CD4-positive, alpha-beta memory T cell (primary cell): ENCODE measurements at regions of chr10 and their contacts with region 1.

Region 1: GRCh38 chr10:102476466-102477141 is 25.3 kb upstream of the C10orf95 start:
- DNase-seq: no peak
- H3K4me3 ChIP-seq: no peak overlapping the region
- H3K4me3 Mint-ChIP-seq: no peak overlapping the region
- H3K27ac ChIP-seq: no peak overlapping the region
- H3K27ac Mint-ChIP-seq: peak overlapping the region in 6 of 7 donors; percentile 18 to 86 (median 59)
- H3K4me1 ChIP-seq: peaks cover 20% of the 10 kb centered on the region
- H3K4me1 Mint-ChIP-seq: peaks cover 11 to 28% (median 17%) of the 10 kb centered on the region in 4 donors
- H3K27me3 ChIP-seq: no peaks in the 10 kb centered on the region
- H3K27me3 Mint-ChIP-seq: no peaks in the 10 kb centered on the region

Region 2: GRCh38 chr10:102090772-102091171 is 385.8 kb before region 1 on chr10:
- CTCF ChIA-PET with region 1: no interaction called
- POLR2A ChIA-PET with region 1: no interaction called
- intact Hi-C with region 1: no loop called
- DNase-seq: no peak
- H3K4me3 ChIP-seq: no peak overlapping the region
- H3K4me3 Mint-ChIP-seq: no peak overlapping the region
- H3K27ac ChIP-seq: no peak overlapping the region
- H3K27ac Mint-ChIP-seq: peak overlapping the region in 3 of 7 donors; percentile 3 to 75 (median 9)
- H3K4me1 ChIP-seq: no peaks in the 10 kb centered on the region
- H3K4me1 Mint-ChIP-seq: peaks cover 0 to 2% (median 0%) of the 10 kb centered on the region in 4 donors
- H3K27me3 ChIP-seq: no peaks in the 10 kb centered on the region
- H3K27me3 Mint-ChIP-seq: no peaks in the 10 kb centered on the region

Region 3: DNA sequence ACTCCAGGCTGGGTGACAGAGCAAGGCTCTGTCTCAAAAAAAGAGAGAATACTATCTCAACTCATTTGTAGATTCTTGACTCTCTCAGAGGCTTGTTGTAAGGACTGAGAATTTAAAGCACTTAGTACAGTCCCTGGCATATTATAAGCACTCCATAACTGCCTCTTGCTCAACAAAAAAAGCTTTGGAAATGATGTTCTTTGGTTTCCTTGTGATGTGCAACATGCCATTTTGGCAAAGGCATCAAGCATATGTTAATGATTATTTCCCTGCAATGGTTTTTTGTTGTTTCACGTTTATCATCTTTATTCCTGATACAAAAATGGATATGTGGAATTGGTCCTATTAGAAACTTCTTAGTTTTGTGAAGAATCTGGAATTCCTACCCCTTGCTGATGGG is 308.7 kb before region 1 on chr10:
- CTCF ChIA-PET with region 1: no interaction called
- POLR2A ChIA-PET with region 1: no interaction called
- intact Hi-C with region 1: loop called (anchors 2 kb)
- DNase-seq: no peak
- H3K4me3 ChIP-seq: no peak overlapping the region
- H3K4me3 Mint-ChIP-seq: no peak overlapping the region
- H3K27ac ChIP-seq: no peak overlapping the region
- H3K27ac Mint-ChIP-seq: peak overlapping the region in 1 of 7 donors; percentile 36
- H3K4me1 ChIP-seq: peaks cover 4% of the 10 kb centered on the region
- H3K4me1 Mint-ChIP-seq: peaks cover 4 to 11% (median 6%) of the 10 kb centered on the region in 4 donors
- H3K27me3 ChIP-seq: no peaks in the 10 kb centered on the region
- H3K27me3 Mint-ChIP-seq: no peaks in the 10 kb centered on the region

Region 4: DNA sequence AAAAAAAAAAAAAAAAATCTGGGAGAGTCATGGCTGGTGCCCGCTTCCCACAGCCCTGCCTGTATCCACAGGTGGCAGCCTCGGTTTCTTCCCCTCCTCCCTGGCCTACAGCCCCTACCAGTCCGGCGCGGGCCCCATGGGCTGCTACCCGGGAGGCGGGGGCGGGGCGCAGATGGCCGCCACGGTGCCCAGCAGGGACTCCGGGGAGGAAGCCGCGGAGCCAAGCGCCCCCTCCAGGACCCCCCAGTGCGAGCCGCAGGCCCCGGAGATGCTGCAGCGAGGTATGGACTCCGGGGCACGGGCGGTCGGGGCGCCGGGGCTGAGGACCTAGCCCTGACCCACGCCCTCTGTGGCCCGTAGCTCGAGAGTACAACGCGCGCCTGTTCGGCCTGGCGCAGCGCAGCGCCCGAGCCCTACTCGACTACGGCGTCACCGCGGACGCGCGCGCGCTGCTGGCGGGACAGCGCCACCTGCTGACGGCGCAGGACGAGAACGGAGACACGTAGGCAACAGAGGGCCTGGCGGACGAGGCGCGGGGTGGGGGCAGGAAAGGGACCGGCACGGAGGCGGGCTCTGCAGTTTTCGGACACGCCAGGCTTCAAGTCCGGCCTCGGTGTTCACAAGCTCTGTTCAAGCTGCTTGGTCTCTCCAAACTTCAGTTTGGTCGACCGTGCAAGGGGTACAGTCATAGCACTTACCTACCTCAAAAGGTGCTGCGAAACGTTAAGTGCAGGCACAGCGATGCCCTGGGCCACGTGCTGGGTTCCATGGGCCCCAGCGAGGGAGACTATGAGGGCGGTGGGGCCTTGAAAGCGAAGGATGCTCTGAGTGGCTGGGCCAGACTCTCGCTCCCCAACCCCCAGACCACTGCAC is 77.2 kb before region 1 on chr10:
- CTCF ChIA-PET with region 1: interaction called, 48 read pairs
- POLR2A ChIA-PET with region 1: interaction called, 13 read pairs
- intact Hi-C with region 1: loop called (anchors 1 kb)
- DNase-seq: peak; percentile 86 to 90 (median 87)
- H3K4me3 ChIP-seq: peak overlapping the region in 1 of 2 donors; percentile 49
- H3K4me3 Mint-ChIP-seq: peak overlapping the region; percentile 53 to 81 (median 74)
- H3K27ac ChIP-seq: peak overlapping the region; percentile 100
- H3K27ac Mint-ChIP-seq: peak overlapping the region; percentile 89 to 100 (median 100)
- H3K4me1 ChIP-seq: peaks cover 44% of the 10 kb centered on the region
- H3K4me1 Mint-ChIP-seq: peaks cover 19 to 68% (median 32%) of the 10 kb centered on the region in 4 donors
- H3K27me3 ChIP-seq: no peaks in the 10 kb centered on the region
- H3K27me3 Mint-ChIP-seq: no peaks in the 10 kb centered on the region

Region 5: DNA sequence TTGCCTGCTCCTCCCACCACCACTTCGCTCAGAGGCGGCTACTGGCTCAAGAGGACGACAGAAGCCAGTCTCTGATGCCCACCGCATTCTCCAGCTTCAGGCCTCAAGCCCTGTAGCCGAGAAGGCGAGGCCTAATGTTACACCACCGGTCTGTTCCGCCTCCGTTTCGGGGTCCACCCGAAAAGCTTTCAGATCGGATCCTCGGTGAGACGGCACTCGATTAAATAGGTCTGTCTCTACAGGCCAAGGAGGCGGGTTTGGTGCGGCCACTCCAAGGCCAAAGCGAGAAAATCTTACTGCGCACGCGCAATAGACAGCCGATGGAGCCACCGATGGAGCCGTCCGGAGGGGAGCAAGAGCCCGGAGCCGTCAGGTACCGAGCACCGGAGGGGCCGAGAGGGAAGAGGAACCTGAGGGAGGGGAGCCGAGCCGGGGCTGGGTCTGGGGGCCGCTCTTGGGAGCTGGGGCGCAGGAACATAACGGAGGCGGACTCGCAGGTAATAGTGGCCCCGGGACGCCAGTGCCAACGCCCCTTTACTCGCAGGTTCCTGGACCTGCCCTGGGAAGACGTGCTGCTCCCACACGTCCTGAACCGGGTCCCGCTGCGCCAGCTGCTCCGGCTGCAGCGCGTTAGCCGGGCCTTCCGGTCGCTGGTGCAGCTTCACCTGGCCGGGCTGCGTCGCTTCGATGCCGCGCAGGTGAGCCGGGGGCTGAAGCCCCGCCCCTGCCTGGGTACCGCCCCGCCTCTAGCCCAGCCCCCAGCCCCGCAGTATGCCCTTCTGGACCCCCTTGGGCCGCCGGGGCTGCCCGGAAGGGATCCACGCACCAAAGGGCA is 55.6 kb before region 1 on chr10 and contains the start of gene FBXL15:
- CTCF ChIA-PET with region 1: interaction called, 21 read pairs
- POLR2A ChIA-PET with region 1: interaction called, 16 read pairs
- intact Hi-C with region 1: loop called (anchors 1 kb)
- DNase-seq: peak; percentile 92 to 94 (median 93)
- H3K4me3 ChIP-seq: peak within 1 kb of the TSS; percentile 61 to 90
- H3K4me3 Mint-ChIP-seq: peak within 1 kb of the TSS; percentile 90 to 99 (median 96)
- H3K27ac ChIP-seq: peak within 1 kb of the TSS; percentile 64
- H3K27ac Mint-ChIP-seq: peak within 1 kb of the TSS; percentile 92 to 98 (median 96)
- H3K4me1 ChIP-seq: peaks cover 37% of the 10 kb centered on the region
- H3K4me1 Mint-ChIP-seq: peaks cover 17 to 53% (median 33%) of the 10 kb centered on the region in 4 donors
- H3K27me3 ChIP-seq: peaks cover 9% of the 10 kb centered on the region
- H3K27me3 Mint-ChIP-seq: peaks cover 10 to 16% of the 10 kb centered on the region in 2 donors
- total RNA-seq, gene FBXL15: 21.1 to 24.1 TPM

Region 6: GRCh38 chr10:102432162-102432950 is 44.2 kb before region 1 on chr10 and contains the start of gene CUEDC2:
- CTCF ChIA-PET with region 1: interaction called, 15 read pairs
- POLR2A ChIA-PET with region 1: interaction called, 3 read pairs
- intact Hi-C with region 1: no loop called
- DNase-seq: peak; percentile 89 to 95 (median 93)
- H3K4me3 ChIP-seq: peak within 1 kb of the TSS; percentile 83 to 92
- H3K4me3 Mint-ChIP-seq: peak within 1 kb of the TSS; percentile 90 to 95 (median 94)
- H3K27ac ChIP-seq: peak within 1 kb of the TSS; percentile 79
- H3K27ac Mint-ChIP-seq: peak within 1 kb of the TSS; percentile 84 to 98 (median 97)
- H3K4me1 ChIP-seq: peaks cover 52% of the 10 kb centered on the region
- H3K4me1 Mint-ChIP-seq: peaks cover 24 to 57% (median 40%) of the 10 kb centered on the region in 4 donors
- H3K27me3 ChIP-seq: no peaks in the 10 kb centered on the region
- H3K27me3 Mint-ChIP-seq: no peaks in the 10 kb centered on the region
- total RNA-seq, gene CUEDC2: 27.2 to 30.8 TPM

Region 7: GRCh38 chr10:102461187-102462054 is 15.2 kb before region 1 on chr10:
- CTCF ChIA-PET with region 1: interaction called, 20 read pairs
- POLR2A ChIA-PET with region 1: interaction called, 10 read pairs
- intact Hi-C with region 1: no loop called
- DNase-seq: peak; percentile 90 to 91 (median 91)
- H3K4me3 ChIP-seq: peak overlapping the region; percentile 52 to 85
- H3K4me3 Mint-ChIP-seq: peak overlapping the region; percentile 83 to 95 (median 90)
- H3K27ac ChIP-seq: peak overlapping the region; percentile 70
- H3K27ac Mint-ChIP-seq: peak overlapping the region; percentile 75 to 95 (median 87)
- H3K4me1 ChIP-seq: peaks cover 16% of the 10 kb centered on the region
- H3K4me1 Mint-ChIP-seq: peaks cover 16 to 38% (median 23%) of the 10 kb centered on the region in 4 donors
- H3K27me3 ChIP-seq: no peaks in the 10 kb centered on the region
- H3K27me3 Mint-ChIP-seq: no peaks in the 10 kb centered on the region

Region 8: DNA sequence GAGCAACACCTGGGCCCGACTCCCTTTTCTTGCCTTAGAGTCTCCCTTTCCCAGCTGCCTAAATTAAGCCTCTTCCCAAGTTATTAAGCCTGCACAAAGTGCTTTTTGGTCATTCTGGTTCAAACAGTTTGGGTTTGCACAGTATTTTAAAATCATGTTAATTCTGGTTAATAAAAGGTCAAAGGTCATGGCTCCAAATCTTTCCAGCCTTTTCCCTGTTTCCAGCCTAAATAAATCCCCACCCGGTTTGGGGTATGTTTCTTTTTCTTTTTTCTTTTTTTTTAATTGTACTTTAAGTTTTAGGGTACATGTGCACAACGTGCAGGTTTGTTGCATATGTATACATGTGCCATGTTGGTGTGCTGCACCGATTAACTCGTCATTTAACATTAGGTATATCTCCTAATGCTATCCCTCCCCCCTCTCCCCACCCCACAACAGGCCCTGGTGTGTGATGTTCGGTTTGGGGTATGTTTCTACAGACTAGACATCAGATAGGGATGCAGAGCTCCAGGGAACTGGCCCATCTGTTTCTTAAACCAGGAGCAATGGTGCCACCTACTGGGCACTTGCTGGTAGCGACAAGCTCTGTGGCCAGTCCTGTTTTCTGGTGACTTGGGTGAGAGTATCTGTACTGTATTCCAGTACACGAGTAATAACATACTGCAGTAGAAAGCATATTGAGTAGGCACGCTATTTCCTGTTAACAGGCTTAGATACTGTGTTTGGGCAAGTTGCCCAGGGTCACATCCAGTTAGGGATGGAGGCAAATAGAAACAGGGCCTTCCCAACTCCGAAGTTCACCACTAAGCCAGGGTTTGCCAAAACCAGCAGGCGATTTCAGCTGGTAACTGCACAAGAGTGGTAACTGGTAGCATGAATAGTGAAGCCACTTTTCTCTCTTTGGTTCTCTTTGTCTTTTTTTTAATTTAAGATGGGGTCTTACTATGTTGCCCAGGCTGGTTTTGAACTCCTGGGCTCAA is 107.1 kb after region 1 on chr10:
- CTCF ChIA-PET with region 1: interaction called, 15 read pairs
- POLR2A ChIA-PET with region 1: no interaction called
- intact Hi-C with region 1: loop called (anchors 1 kb)
- DNase-seq: peak; percentile 74 to 83 (median 76)
- H3K4me3 ChIP-seq: no peak overlapping the region
- H3K4me3 Mint-ChIP-seq: no peak overlapping the region
- H3K27ac ChIP-seq: no peak overlapping the region
- H3K27ac Mint-ChIP-seq: peak overlapping the region in 5 of 7 donors; percentile 7 to 84 (median 60)
- H3K4me1 ChIP-seq: peaks cover 8% of the 10 kb centered on the region
- H3K4me1 Mint-ChIP-seq: peaks cover 13 to 20% (median 15%) of the 10 kb centered on the region in 4 donors
- H3K27me3 ChIP-seq: no peaks in the 10 kb centered on the region
- H3K27me3 Mint-ChIP-seq: no peaks in the 10 kb centered on the region